Endothelial cell of umbilical vein (primary cell): ENCODE measurements at regions of chr2 and their contacts with region 1.

Region 1: GRCh38 chr2:151315381-151315903 is 26.0 kb upstream of the NMI start:
- DNase-seq: no peak
- H3K4me3 ChIP-seq: no peak overlapping the region
- H3K27ac ChIP-seq: no peak overlapping the region
- H3K4me1 ChIP-seq: no peaks in the 10 kb centered on the region
- H3K27me3 ChIP-seq: no peaks in the 10 kb centered on the region
- CTCF ChIP-seq: no peak
- POLR2A ChIP-seq: no peak

Region 2: GRCh38 chr2:150325656-150326314 is 989.7 kb before region 1 on chr2:
- CTCF ChIA-PET with region 1: no interaction called
- POLR2A ChIA-PET with region 1: interaction called, 10 read pairs
- dilution Hi-C with region 1: no loop called
- intact Hi-C with region 1: no loop called
- DNase-seq: no peak
- H3K4me3 ChIP-seq: no peak overlapping the region
- H3K27ac ChIP-seq: no peak overlapping the region
- H3K4me1 ChIP-seq: no peaks in the 10 kb centered on the region
- H3K27me3 ChIP-seq: no peaks in the 10 kb centered on the region
- CTCF ChIP-seq: no peak
- POLR2A ChIP-seq: no peak